ENCODE measurements at regions of chr13 and their contacts with region 1.

Region 1: DNA sequence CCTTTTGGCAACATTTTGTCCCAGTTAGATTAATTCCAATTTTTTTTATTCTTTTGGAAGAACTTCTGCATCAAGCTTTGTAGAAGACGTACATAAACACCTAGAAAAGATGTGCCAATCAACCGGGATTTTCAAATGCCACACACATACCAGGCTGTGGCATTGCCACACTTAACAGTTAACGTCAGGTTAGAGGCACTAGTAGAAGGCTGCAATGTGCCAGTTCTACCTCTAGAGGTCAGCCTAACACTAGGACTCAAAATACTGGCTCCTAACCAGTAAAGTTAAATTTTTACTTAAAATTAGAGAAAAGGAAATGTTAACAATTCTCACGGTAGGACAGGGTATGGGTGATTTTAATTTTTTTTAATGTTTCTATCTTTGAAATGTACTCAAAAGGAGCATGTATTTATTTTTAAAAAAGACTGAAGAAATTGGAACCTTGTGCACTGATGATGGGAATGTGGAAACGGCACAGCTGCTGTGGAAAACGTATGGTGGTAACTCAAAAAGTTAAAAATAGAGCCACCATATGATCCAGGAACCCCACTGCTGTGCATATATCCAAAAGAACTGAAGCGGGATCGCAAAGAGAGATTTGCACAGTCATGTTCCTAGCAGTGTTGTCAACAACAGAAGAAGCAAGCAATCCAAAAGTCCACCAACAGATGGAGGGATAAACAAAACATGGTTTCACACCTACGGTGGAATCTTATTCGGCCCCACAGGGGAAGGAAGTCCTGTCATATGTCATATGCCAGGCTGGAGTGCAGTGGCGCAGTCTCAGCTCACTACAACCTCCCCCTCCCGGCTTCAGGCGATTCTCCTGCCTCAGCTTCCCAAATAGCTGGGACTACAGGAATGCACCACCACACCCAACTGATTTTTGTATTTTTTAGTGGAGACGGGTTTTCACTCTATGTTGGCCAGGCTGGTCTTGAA is 30.3 kb downstream of the CRYL1 start:
- DNase-seq: no peak
- ATAC-seq: peak; percentile 87

Region 2: GRCh38 chr13:20090349-20090748 is 405.0 kb before region 1 on chr13:
- intact Hi-C with region 1: no loop called
- DNase-seq: no peak
- ATAC-seq: no peak

Region 3: GRCh38 chr13:20461481-20461859 is 33.9 kb before region 1 on chr13:
- intact Hi-C with region 1: no loop called
- DNase-seq: no peak
- ATAC-seq: no peak

Region 4: DNA sequence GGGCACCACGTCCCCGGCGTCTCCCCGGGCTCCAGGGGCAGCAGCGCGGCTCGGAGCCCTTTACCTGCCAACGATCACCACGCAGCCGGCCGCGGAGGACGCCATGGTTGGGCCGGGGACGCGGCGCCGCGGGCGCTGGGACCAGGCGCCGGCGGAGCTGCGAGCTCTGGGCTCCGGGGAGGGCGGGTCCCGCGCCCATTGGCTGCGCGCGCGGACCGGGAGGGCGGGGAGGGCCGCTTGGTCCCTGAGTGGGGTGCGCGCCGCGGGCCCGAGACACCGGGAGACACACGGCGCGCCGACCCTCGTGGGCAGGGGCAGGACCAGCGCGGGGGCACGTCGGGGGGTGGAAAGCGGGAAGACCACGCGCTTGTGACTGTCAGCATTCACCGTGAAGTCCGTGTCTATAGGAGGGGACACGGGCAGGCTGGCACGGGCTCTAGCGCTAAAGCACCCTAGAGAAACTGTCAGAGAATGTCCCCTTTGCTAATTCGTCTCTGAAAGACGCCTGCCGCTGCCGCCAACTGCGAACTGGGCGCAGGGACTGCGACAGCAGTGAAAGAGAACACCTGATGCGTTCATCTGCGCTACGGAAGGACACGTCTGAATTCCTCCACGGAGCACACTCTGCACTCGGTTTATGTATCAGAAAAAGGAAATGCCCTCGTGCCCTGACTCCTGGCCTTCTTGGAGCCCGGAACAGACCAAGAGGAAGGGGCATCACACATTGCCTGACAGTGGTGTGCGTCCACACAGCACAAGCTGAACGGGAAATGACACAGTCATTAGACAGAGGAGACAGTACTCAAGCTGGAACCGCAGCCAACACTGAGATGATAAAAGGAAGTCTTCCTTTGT is 30.6 kb after region 1 on chr13 and contains the start of gene CRYL1:
- intact Hi-C with region 1: no loop called
- DNase-seq: peak; percentile 92
- ATAC-seq: peak; percentile 97
- total RNA-seq, gene CRYL1: 19.8 TPM

Region 5: DNA sequence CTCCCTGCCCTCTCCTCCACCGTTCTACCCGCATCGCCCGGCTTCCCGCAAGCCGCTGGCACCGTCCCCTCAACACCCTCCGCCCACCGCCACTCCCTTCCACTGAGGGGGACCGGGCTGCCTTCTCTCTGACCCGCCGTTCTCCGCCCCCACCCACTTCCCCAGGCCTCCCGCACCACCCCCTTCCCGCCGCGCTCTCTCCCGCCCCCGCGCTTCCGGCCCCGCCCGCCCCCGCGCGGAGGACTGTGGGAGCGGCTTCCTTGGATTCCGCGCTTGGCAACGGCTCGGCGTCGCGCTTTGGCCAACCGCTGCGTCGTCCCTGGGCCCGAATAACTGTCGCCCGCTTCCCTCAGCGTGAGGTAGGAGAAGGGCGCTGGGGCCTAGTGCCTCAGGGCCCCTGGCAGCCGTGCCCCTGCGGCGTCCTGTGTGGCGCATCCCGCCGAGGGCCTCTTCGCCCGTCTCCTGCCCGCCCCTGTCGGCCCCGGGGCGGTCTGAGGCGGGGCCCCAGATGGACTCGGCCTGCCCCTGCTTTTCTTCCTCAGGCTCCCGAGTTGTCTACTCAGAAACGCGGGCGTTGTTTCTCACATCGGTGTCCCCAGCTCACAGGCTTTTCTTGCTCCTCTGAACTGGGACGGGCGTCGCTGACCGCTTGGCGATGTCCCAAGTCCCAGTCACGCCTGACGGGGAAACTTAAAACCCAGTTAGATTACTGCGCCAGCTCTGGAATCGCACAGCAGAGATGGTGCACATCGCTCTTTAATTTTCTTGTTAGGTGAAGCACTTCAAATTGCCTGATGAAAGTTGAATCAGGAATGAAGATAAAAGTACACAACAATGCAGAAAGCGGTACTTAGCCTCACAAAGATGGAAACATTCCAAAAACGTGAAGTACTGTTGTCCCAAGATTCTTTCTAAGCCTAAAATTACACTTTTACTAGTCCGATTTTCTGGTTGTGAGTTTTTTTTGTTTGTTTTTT is 71.8 kb after region 1 on chr13 and contains the start of gene IFT88:
- intact Hi-C with region 1: loop called (anchors 1 kb)
- DNase-seq: peak; percentile 96
- ATAC-seq: peak; percentile 99
- total RNA-seq, gene IFT88: 5.8 TPM

Region 6: GRCh38 chr13:20828539-20829364 is 333.4 kb after region 1 on chr13:
- intact Hi-C with region 1: loop called (anchors 5 kb)
- DNase-seq: no peak
- ATAC-seq: no peak

Region 7: DNA sequence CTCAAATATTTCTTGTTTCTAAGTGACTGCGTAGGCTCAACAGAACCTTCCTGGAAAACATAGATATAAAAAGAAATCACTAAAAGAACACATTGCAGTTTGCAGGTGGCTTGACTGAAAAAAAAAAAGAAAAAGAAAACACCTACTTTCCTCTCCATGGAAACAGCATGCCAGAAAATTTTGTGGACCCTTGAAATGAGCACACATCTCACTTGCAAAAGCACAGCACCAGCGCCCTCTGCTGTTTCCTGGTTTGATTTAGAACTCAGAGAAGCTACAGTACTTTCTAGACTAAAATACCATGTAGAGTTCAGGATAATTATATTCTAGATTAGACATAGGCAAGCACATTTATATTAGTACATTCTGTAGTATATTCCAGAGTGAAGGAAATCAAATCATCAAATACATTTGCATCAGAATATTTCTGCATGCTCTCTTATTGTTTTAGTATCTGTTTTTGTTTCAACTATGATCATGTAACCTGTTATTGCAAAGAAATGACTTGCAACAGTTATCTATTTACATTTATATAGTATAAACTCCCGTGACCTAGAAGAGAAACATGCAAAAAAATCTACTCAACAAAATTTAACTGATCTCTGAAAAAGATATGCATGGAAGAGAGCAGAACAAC is 429.5 kb after region 1 on chr13:
- intact Hi-C with region 1: loop called (anchors 1 kb)
- DNase-seq: peak; percentile 77
- ATAC-seq: no peak